Mammary epithelial cell (primary cell): ENCODE measurements at regions of chr7 and their contacts with region 1.

Region 1: DNA sequence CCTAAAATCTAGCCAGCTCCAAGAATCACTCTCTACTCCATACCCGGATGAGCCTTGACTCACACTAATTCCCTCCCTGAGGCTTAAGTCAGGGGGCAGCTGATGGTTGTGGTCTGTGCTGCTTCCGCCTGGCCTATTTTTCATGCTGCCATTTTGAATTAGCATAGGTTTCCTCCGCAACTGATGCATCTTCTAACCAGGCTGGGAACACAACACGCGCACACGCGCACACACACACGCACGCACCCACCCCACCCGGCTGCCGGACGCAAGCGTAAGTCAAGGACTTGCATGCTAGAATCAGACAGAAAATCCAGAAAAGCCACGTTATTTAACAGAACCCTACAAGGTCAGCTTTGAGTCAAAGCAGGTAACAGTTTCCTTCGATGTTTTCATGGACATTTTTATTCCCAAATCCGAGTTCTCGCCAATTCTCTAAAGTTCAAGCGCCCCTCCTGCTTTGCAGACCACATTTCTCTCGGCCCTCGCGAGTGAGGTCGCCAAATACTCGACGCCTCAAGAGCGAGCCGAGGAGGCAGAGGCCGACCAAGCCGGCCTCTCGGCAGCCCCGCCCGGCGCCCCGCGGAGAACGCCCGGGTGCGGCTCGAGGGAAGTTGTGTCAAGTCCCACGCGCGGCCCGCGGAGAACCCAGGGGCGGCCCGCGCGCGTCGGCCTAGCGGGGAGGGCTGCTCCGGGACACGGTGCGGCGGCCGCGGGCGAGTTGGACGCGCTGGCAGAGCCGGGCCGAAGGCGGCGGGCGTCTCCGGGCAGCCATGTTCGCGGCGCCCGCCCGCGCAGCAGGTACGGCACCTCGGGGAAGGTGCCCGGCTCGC is 961 bp downstream of the SCRN1 start:
- DNase-seq: peak; percentile 63
- H3K4me3 ChIP-seq: peak overlapping the region; percentile 87 to 99 (median 97)
- H3K27ac ChIP-seq: peak overlapping the region; percentile 57
- H3K4me1 ChIP-seq: peaks cover 21% of the 10 kb centered on the region
- H3K27me3 ChIP-seq: no peaks in the 10 kb centered on the region
- CTCF ChIP-seq: no peak

Region 2: GRCh38 chr7:30032310-30033130 is 43.9 kb after region 1 on chr7:
- CTCF ChIA-PET with region 1: interaction called, 12 read pairs
- dilution Hi-C with region 1: no loop called
- in situ Hi-C with region 1: no loop called
- intact Hi-C with region 1: no loop called
- DNase-seq: no peak
- H3K4me3 ChIP-seq: no peak overlapping the region
- H3K27ac ChIP-seq: no peak overlapping the region
- H3K4me1 ChIP-seq: peaks cover 21% of the 10 kb centered on the region
- H3K27me3 ChIP-seq: no peaks in the 10 kb centered on the region
- CTCF ChIP-seq: no peak

Region 3: GRCh38 chr7:30062591-30062990 is 74.0 kb after region 1 on chr7:
- CTCF ChIA-PET with region 1: interaction called, 3 read pairs
- dilution Hi-C with region 1: no loop called
- in situ Hi-C with region 1: no loop called
- intact Hi-C with region 1: loop called (anchors 10 kb)
- DNase-seq: peak; percentile 5
- H3K4me3 ChIP-seq: no peak overlapping the region
- H3K27ac ChIP-seq: no peak overlapping the region
- H3K4me1 ChIP-seq: no peaks in the 10 kb centered on the region
- H3K27me3 ChIP-seq: no peaks in the 10 kb centered on the region
- CTCF ChIP-seq: peak; percentile 50 to 53

Region 4: DNA sequence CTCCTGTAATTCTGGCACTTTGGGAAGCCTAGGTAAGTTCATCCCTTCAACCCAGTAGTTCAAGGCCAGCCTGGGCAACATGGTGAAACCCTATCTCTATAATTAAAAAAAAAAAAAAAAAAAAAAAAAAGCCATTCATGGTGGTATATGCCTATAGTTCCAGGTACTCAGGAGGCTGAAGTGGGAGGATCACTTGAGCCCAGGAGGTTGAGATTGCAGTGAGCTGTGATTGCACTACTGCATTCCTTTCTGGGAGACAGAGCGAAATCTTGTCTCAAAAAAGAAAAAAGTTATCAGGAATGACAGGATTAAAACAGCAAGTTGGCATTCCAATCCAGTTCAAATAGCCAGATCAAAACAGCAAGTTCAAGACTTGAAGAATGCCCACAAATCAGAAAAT is 116.6 kb after region 1 on chr7:
- CTCF ChIA-PET with region 1: no interaction called
- dilution Hi-C with region 1: no loop called
- in situ Hi-C with region 1: no loop called
- intact Hi-C with region 1: no loop called
- DNase-seq: no peak
- H3K4me3 ChIP-seq: no peak overlapping the region
- H3K27ac ChIP-seq: no peak overlapping the region
- H3K4me1 ChIP-seq: no peaks in the 10 kb centered on the region
- H3K27me3 ChIP-seq: no peaks in the 10 kb centered on the region
- CTCF ChIP-seq: no peak

Region 5: DNA sequence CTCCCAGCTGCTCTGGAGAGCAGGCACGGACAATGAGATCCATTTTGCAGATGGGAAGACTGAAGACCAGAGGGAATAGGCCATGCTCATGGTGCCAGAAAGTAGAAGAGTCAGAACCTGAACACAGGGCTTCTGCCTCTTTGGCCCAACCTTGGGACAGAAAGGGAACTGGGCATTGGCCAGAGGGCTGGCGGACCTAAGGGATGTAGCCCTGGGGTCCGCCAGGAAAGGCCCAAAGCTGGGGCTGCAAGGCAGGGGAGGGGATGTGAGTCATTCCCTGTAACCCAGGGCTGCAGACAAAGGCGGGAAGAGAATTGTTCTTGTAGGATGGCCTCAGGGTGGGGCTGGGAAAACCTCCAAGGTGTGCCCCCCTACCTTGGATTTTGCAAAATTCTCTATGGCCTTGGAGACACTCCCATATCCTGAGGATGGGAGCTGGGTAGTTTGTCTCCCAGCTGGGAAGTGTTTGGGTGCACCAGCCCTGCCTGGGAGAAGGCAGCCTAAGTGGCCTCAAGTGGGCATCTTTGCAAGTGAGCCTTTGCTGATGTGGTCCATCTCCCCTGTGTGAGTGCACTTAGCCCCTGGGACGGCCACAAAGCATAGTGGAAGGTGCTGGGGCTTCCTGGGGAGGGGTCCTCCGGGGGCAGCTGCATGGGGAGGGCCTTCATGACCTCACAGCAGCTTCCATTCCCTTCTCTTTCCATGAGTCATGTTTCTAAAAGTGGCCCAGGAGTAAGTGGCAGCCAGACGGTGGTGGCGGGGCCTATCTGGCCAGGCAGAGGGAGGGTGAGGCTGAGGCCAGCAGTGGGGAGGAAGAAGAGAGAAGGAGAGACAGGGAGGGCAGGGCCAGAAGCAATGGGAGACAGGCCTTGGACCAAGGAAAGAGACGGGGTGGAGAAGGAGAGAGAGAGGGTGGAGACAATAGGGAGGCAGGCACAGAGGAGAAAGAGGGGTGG is 932.2 kb after region 1 on chr7:
- CTCF ChIA-PET with region 1: no interaction called
- dilution Hi-C with region 1: no loop called
- in situ Hi-C with region 1: no loop called
- intact Hi-C with region 1: no loop called
- DNase-seq: no peak
- H3K4me3 ChIP-seq: no peak overlapping the region
- H3K27ac ChIP-seq: no peak overlapping the region
- H3K4me1 ChIP-seq: peaks cover 7% of the 10 kb centered on the region
- H3K27me3 ChIP-seq: no peaks in the 10 kb centered on the region
- CTCF ChIP-seq: no peak